ENCODE measurements at regions of chr12 and their contacts with region 1.

Region 1: DNA sequence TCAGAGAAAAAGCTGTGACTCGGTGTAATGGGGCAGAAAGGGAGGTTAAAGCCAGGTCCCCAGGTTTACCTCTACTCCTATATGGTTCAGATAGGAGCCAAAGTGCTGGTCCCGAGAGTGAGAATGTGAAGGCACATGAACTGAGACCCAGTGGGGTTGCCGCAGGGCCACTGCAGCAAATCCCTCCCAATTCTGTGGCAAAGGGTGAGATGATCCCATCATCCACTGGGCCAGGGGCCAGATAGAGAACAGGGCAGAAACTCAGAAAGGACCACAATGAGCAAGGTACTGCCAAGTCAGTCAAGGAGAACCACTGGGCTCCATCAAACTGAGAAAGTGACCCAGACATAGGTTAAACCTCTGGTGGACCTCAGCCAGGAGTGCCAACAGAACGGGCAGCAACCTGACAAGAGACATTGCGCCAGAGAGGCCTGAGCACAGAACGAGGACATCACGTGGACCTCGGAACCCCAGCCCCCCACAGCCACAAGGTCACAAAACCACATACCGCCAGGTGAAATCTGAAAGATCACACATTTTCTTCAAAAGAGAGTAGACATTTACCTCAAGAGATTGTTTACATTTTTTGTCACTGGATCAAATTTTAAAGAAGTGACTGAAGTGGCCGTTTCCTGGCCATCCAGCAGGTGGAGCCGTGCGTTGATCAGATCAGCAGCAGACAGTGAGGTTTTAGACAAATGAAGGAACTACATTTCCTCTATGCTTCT is 20.5 kb upstream of the ITPR2 start:
- DNase-seq: peak; percentile 75
- ATAC-seq: peak; percentile 86

Region 2: GRCh38 chr12:26723379-26724308 is 129.8 kb before region 1 on chr12:
- intact Hi-C with region 1: no loop called
- DNase-seq: no peak
- ATAC-seq: peak; percentile 94

Region 3: GRCh38 chr12:26884765-26885576 is 31.5 kb after region 1 on chr12:
- intact Hi-C with region 1: loop called (anchors 5 kb)
- DNase-seq: peak; percentile 70
- ATAC-seq: peak; percentile 96

Measured in left ventricle myocardium superior (tissue), 1 donor.